CD8-positive, alpha-beta T cell (primary cell): ENCODE measurements at regions of chr19 and their contacts with region 1.

Region 1: GRCh38 chr19:37370880-37371661 is at the start of gene ZNF527:
- DNase-seq: peak; percentile 94 to 98 (median 97)
- ATAC-seq: peak; percentile 92
- H3K4me3 ChIP-seq: peak within 1 kb of the TSS; percentile 80 to 95
- H3K4me3 Mint-ChIP-seq: peak within 1 kb of the TSS; percentile 99
- H3K27ac ChIP-seq: peak within 1 kb of the TSS; percentile 82 to 90
- H3K27ac Mint-ChIP-seq: peak within 1 kb of the TSS; percentile 96
- H3K4me1 ChIP-seq: peaks cover 7% of the 10 kb centered on the region
- H3K4me1 Mint-ChIP-seq: peaks cover 20% of the 10 kb centered on the region
- H3K27me3 ChIP-seq: no peaks in the 10 kb centered on the region
- H3K27me3 Mint-ChIP-seq: no peaks in the 10 kb centered on the region
- CTCF ChIP-seq: no peak
- total RNA-seq, gene ZNF527: 12.9 to 14.2 TPM

Region 2: DNA sequence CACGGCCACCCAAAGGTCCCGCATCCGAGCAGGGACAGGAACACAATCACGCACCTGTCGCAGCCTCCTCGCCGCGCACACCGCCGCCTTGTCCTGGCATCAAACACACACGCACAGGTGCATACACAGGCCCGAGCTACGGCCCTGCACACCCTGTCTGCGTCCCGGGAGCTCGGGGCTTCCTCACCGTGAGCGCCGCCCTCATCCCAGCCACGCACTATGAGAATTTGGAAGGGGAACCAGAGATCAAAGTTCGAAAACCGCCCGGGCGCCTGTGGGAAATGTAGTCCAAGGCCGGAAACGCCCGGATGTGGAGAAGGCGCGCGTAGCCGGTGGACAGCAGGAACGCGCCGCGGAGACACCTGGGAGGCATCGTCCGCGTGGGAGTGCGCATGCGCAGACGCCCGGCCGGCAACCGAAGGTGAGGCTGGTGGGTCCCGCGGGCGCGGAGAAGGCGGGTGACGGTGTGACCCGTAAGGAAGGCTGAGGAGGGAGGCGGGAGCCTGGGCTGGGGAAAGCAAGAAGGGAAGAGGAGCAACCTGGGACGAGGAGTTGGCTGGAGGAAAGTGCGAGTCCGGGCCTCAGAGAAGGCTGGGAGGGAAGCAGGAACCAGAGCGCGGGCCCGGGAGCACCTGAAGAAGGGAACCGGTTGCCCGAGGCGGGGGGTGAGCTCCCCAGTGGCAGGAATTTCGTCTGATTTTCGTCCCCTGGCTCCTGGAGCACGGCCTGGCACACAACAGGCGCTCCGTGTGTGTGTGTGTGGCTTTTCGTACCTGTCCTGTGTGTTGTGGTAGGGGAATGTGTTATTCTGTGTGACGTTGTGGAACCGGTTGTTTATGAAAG is 683.6 kb before region 1 on chr19 and contains the start of gene ZNF567:
- CTCF ChIA-PET with region 1: no interaction called
- POLR2A ChIA-PET with region 1: no interaction called
- intact Hi-C with region 1: loop called (anchors 2 kb)
- DNase-seq: peak; percentile 91 to 99 (median 98)
- ATAC-seq: peak; percentile 91
- H3K4me3 ChIP-seq: peak within 1 kb of the TSS; percentile 82 to 87
- H3K4me3 Mint-ChIP-seq: peak within 1 kb of the TSS; percentile 99
- H3K27ac ChIP-seq: peak within 1 kb of the TSS; percentile 71 to 81
- H3K27ac Mint-ChIP-seq: peak within 1 kb of the TSS; percentile 96
- H3K4me1 ChIP-seq: peaks cover 18% of the 10 kb centered on the region
- H3K4me1 Mint-ChIP-seq: peaks cover 35% of the 10 kb centered on the region
- H3K27me3 ChIP-seq: no peaks in the 10 kb centered on the region
- H3K27me3 Mint-ChIP-seq: no peaks in the 10 kb centered on the region
- CTCF ChIP-seq: no peak
- total RNA-seq, gene ZNF567: 10.7 to 11.1 TPM

Region 3: GRCh38 chr19:37172368-37173366 is 198.4 kb before region 1 on chr19 and contains the start of gene ZNF585A:
- CTCF ChIA-PET with region 1: no interaction called
- POLR2A ChIA-PET with region 1: no interaction called
- intact Hi-C with region 1: loop called in 1 of 2 experiments (anchors 1 kb)
- DNase-seq: peak; percentile 83 to 98 (median 90)
- ATAC-seq: peak; percentile 99
- H3K4me3 ChIP-seq: peak within 1 kb of the TSS; percentile 85 to 91
- H3K4me3 Mint-ChIP-seq: no peak within 1 kb of the TSS
- H3K27ac ChIP-seq: peak within 1 kb of the TSS; percentile 74 to 89
- H3K27ac Mint-ChIP-seq: no peak within 1 kb of the TSS
- H3K4me1 ChIP-seq: no peaks in the 10 kb centered on the region
- H3K4me1 Mint-ChIP-seq: peaks cover 6% of the 10 kb centered on the region
- H3K27me3 ChIP-seq: no peaks in the 10 kb centered on the region
- H3K27me3 Mint-ChIP-seq: no peaks in the 10 kb centered on the region
- CTCF ChIP-seq: no peak
- total RNA-seq, gene ZNF585A: 5.3 TPM

Region 4: GRCh38 chr19:37506387-37507166 is 135.5 kb after region 1 on chr19 and contains the start of gene ZNF793:
- CTCF ChIA-PET with region 1: no interaction called
- POLR2A ChIA-PET with region 1: interaction called, 14 read pairs
- intact Hi-C with region 1: loop called (anchors 1 kb)
- DNase-seq: peak; percentile 53 to 89 (median 83)
- ATAC-seq: peak; percentile 87
- H3K4me3 ChIP-seq: peak within 1 kb of the TSS; percentile 82 to 86
- H3K4me3 Mint-ChIP-seq: no peak within 1 kb of the TSS
- H3K27ac ChIP-seq: peak within 1 kb of the TSS; percentile 94 to 97
- H3K27ac Mint-ChIP-seq: no peak within 1 kb of the TSS
- H3K4me1 ChIP-seq: peaks cover 16% of the 10 kb centered on the region
- H3K4me1 Mint-ChIP-seq: no peaks in the 10 kb centered on the region
- H3K27me3 ChIP-seq: no peaks in the 10 kb centered on the region
- H3K27me3 Mint-ChIP-seq: no peaks in the 10 kb centered on the region
- CTCF ChIP-seq: no peak
- total RNA-seq, gene ZNF793: 2.4 to 3.3 TPM